Cardiac septum (tissue), 1 donor: ENCODE measurements at regions of chr1 and their contacts with region 1.

Region 1: GRCh38 chr1:70134148-70134547 is 71.2 kb downstream of the LRRC40 start:
- DNase-seq: no peak

Region 2: DNA sequence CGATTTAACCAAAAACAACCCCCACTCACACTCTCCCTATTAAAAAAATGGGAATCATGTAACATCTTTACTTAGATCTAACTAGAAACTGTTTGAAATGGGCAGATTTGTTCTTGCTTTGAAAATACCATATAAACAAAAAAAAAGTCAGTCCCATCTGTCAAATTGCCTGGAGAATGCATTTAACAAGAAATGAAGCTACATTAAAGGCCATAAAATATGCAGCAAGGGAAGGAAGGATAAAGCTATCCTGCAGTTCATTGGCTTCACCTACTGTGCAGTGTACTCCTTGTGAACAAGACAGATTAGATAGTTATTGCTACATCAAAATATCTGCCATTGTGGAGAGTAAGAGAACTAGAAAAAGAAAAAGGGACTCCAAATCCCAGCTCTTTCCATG is 405.9 kb before region 1 on chr1:
- intact Hi-C with region 1: no loop called
- DNase-seq: no peak

Region 3: DNA sequence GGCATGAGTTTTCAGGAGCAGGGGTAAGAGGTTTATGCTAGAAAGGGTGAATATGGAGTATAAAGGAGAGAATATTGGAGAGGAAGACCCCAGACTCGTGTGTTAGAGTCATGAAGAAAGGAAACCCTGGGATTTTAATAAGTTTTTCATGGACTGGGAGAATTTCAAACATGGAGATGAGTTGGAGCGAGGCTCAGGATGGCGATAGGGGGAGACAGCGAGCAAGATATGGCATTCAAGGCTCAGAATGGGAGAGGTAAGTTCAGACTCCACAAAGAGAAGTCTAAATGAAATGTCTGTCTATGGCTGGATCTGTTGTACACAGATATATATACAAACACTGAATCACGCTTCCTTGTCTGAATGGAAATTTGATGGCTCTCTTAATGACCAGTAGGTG is 21.3 kb before region 1 on chr1:
- intact Hi-C with region 1: no loop called
- DNase-seq: no peak

Region 4: DNA sequence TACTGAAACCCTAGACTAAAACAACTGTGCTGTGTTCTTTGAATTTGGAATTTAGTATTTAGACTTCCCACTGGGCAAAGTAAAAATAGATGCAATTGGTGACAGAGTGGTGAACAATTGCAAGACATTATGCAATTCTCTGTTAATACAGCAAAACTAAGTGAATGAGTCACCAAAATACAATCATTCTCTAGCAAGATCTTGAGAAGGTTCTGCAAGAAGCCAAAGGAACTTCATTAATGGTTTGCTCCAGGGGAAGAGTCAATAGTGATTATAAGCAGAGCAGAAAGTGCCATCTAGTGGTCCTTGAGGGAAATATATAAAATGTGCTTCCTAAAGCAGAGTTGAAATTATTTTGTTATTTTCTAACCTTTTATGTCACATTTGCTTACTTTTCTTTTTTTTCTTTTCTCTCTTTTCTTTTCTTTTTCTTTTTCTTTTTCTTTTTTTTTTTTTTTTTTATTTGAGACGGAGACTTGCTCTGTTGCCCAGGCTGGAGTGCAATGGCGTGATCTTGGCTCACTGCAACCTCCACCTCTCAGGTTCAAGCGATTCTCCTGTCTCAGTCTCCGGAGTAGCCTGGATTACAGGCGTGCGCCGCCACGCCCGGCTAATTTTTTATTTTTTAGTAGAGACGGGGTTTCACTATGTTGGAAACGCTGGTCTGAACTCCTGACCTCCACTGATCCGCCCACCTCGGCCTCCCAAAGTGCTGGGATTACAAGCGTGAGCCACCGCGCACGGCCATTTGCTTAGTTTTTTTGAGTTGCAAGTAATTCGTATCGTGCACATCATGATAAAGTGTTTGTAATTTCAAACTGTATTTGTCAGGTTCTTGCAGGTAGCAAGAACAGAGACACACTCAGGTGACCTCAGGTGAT is 376.1 kb after region 1 on chr1:
- intact Hi-C with region 1: loop called (anchors 5 kb)
- DNase-seq: no peak